ENCODE measurements at regions of chr4 and their contacts with region 1.

Region 1: DNA sequence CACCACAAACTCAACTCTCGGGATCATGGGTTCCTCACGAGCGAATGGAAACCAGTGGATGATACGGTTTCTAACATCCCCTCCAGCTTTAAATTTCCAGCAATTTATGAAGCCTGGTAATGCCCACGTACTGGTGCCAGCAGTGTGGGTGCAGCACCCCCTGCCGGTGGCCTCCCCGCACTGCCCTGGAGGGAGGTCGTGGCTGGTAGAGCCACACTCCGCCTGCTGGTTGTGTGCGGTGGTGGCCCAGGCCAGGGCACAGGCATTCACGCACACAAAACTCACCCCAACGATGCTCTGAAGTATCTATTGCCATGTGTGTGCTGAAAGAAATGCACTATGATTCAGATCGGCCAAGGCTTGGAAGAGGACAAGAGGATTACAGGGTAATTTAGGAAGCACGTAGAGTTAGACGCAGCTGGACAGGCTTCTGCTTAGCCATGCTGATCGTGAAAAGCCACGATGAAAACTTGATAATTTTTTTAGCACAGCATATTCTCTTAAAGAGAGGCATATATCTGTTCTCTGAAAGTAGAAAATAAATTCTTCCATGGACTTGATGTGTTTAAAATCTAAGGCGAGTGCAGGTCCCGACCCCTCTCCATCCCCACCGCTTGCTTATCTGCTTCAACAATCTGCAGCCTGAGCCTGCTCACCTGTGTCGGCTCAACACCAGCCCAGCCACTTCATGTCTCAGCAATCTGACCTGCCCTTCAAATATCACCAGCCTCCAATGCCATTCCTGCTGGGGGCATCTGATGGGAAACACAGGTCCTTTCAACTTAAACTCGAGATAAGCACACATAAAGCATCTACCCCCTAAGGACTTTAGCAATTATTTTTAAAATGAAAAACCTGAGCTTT is 59.0 kb downstream of the SCD5 start:
- DNase-seq: peak; percentile 70

Region 2: GRCh38 chr4:82462415-82462831 is 277.1 kb before region 1 on chr4:
- in situ Hi-C with region 1: loop called (anchors 25 kb)
- DNase-seq: peak; percentile 77